ENCODE measurements at regions of chr22 and their contacts with region 1.

Region 1: DNA sequence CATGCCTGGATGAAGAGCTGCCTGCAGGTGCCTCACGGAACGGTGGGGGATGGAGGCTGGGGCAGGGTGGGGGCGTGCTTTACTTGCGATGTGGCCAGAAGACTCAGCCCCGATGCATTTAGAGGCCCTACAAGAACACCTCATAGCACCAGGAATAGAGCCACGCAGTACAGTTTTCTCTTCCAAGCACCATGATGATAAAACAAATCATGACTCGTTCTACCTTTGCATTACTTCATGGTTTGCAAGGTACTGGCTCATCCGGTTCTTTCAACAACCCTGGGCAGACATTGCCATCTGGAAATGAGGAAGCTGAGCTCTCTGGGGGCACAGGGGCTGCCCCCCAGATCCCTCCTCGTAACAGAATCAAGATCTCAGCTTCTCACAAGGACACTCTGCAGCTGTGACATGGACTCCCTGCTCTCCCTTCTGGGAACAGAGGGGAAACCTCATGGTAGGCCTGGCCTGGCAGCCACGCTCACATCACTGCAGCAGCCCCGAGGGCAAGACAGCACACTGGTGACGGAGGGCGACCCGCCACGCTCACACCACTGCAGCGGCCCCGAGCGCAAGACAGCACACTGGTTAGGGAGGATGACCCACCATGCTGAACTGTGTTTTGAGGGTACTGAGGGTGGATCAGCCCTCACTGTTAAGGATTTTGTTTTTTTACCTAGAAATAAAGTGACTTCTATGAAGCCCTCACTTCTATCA is 46.9 kb downstream of the PHF21B start:
- DNase-seq: no peak
- H3K4me3 ChIP-seq: no peak overlapping the region
- H3K27ac ChIP-seq: no peak overlapping the region
- H3K4me1 ChIP-seq: peaks cover 0 to 30% of the 10 kb centered on the region in 2 experiments; a peak in 1 of 4 replicates
- H3K27me3 ChIP-seq: no peaks in the 10 kb centered on the region
- CTCF ChIP-seq: no peak
- EP300 ChIP-seq: no peak
- RAD21 ChIP-seq: no peak

Region 2: GRCh38 chr22:44975427-44976262 is 12.7 kb after region 1 on chr22:
- CTCF ChIA-PET with region 1: interaction called, 10 read pairs
- POLR2A ChIA-PET with region 1: no interaction called
- DNase-seq: peak; percentile 81
- H3K4me3 ChIP-seq: no peak overlapping the region; a peak in 1 of 4 replicates
- H3K27ac ChIP-seq: no peak overlapping the region
- H3K4me1 ChIP-seq: peaks cover 0 to 3% of the 10 kb centered on the region in 2 experiments; a peak in 1 of 4 replicates
- H3K27me3 ChIP-seq: no peaks in the 10 kb centered on the region
- CTCF ChIP-seq: peak; percentile 84
- EP300 ChIP-seq: no peak
- RAD21 ChIP-seq: peak; percentile 74